SK-N-SH (cell line): ENCODE measurements at regions of chr5 and their contacts with region 1.

Region 1: DNA sequence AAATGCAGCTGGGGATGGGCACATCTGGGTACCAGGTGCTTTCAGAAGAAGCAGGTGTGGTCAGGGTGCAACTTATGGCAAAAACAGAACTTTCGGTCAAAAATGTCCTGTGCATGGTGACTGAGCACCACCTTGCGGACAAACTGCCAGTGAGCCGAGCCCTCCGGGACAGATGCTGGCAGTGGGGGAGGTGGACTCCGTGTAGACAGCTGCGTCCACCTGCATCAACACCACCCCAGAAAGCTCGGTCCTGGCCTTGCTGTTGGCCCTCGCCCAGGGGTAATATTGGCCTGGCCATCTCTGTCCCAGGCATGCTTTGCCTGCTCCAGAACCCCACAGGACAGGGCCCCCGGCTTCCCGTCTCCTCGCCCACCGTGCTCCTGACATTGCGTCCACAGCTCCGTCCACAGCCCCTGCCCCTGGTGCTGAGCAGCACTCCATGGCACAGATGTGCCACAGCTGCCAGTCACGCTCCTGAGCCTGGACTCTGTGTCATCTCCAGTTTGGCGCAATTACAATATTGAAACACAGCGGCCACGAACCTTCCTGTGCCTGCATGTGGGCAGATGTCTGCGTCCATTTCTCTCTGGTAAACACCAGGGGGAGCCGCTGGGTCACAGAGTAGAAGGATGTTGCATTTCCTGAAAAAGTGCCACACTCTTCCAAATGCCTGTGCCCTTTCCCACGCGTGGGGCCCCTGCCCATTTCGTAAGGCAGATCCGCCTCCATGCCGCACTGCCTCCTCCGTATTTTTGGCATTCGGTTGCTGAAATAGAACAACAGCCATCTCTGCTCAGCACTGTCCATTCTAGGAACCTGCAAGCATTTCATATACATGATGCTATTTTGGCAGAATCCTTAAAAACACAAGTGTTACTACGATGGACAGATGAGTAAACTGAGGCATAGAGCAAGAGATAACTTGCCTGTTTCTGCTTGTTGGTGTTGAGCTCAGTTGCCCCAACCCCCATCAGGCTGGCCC is 33.4 kb upstream of the SLC6A19 start:
- DNase-seq: peak; percentile 86
- H3K4me3 ChIP-seq: peak overlapping the region; percentile 26 to 49; a peak in 2 of 4 replicates
- H3K27ac ChIP-seq: no peak overlapping the region
- H3K4me1 ChIP-seq: peaks cover 0 to 8% of the 10 kb centered on the region in 2 experiments; a peak in 1 of 4 replicates
- H3K27me3 ChIP-seq: no peaks in the 10 kb centered on the region
- CTCF ChIP-seq: peak; percentile 65
- EP300 ChIP-seq: no peak
- RAD21 ChIP-seq: peak; percentile 87

Region 2: DNA sequence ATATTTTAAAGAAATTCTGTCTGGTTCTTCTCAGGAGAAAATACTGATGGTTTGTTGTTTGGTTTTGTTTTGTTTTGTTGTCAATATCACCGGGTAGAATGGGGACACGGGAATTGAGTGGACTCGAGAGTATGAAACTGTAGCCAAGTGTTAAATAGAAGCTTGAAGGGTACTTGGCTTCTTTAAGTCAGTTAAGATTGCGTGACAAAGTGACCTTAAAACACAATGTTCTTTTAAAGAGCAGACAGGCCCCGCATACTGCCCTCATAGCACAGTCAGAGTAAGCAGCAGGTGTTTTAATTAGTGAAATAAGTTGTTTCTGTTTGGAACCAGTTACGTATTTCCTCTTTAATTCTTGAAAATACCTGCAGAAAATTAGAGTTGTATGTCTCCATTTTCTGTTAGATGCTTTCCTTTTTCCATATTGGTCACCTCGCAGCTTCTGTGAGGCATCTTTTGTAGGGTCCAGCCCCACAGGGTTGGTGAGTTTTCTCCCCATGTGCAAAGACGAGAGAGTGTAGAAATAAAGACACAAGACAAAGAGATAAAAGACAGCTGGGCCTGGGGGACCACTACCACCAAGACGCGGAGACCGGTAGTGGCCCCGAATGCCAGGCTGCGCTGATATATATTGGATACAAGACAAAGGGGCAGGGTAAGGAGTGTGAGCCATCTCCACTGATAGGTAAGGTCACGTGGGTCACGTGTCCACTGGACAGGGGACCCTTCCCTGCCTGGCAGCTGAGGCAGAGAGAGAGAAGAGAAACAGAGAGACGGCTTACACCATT is 265.7 kb before region 1 on chr5:
- CTCF ChIA-PET with region 1: interaction called, 12 read pairs
- POLR2A ChIA-PET with region 1: no interaction called
- DNase-seq: no peak
- H3K4me3 ChIP-seq: no peak overlapping the region
- H3K27ac ChIP-seq: no peak overlapping the region
- H3K4me1 ChIP-seq: no peaks in the 10 kb centered on the region
- H3K27me3 ChIP-seq: no peaks in the 10 kb centered on the region
- CTCF ChIP-seq: no peak
- EP300 ChIP-seq: no peak
- RAD21 ChIP-seq: no peak

Region 3: GRCh38 chr5:932628-933250 is 235.3 kb before region 1 on chr5:
- CTCF ChIA-PET with region 1: interaction called, 54 read pairs
- POLR2A ChIA-PET with region 1: no interaction called
- DNase-seq: no peak
- H3K4me3 ChIP-seq: no peak overlapping the region
- H3K27ac ChIP-seq: no peak overlapping the region
- H3K4me1 ChIP-seq: no peaks in the 10 kb centered on the region
- H3K27me3 ChIP-seq: peaks cover 12% of the 10 kb centered on the region
- CTCF ChIP-seq: no peak
- EP300 ChIP-seq: no peak
- RAD21 ChIP-seq: no peak

Region 4: GRCh38 chr5:1004461-1005248 is 163.4 kb before region 1 on chr5:
- CTCF ChIA-PET with region 1: interaction called, 22 read pairs
- POLR2A ChIA-PET with region 1: no interaction called
- DNase-seq: peak; percentile 78
- H3K4me3 ChIP-seq: peak overlapping the region; percentile 31 to 37; a peak in 2 of 4 replicates
- H3K27ac ChIP-seq: no peak overlapping the region
- H3K4me1 ChIP-seq: peaks cover 0 to 2% of the 10 kb centered on the region in 2 experiments; a peak in 1 of 4 replicates
- H3K27me3 ChIP-seq: peaks cover 54% of the 10 kb centered on the region
- CTCF ChIP-seq: no peak; the same call in 1 of the 2 replicates
- EP300 ChIP-seq: no peak
- RAD21 ChIP-seq: peak; percentile 19; the same call in 1 of the 2 replicates

Region 5: GRCh38 chr5:1090538-1090937 is 77.5 kb before region 1 on chr5:
- CTCF ChIA-PET with region 1: no interaction called
- POLR2A ChIA-PET with region 1: no interaction called
- DNase-seq: no peak
- H3K4me3 ChIP-seq: no peak overlapping the region
- H3K27ac ChIP-seq: no peak overlapping the region
- H3K4me1 ChIP-seq: peaks cover 0 to 8% of the 10 kb centered on the region in 2 experiments; a peak in 1 of 4 replicates
- H3K27me3 ChIP-seq: no peaks in the 10 kb centered on the region
- CTCF ChIP-seq: no peak
- EP300 ChIP-seq: no peak
- RAD21 ChIP-seq: no peak

Region 6: GRCh38 chr5:1125030-1125357 is 43.0 kb before region 1 on chr5:
- CTCF ChIA-PET with region 1: interaction called, 12 read pairs
- POLR2A ChIA-PET with region 1: no interaction called
- DNase-seq: peak; percentile 93
- H3K4me3 ChIP-seq: no peak overlapping the region
- H3K27ac ChIP-seq: peak overlapping the region in 1 of 2 experiments; percentile 54; a peak in 2 of 4 replicates
- H3K4me1 ChIP-seq: peaks cover 0 to 30% of the 10 kb centered on the region in 2 experiments; a peak in 1 of 4 replicates
- H3K27me3 ChIP-seq: peaks cover 4% of the 10 kb centered on the region; the same call in 1 of the 2 replicates
- CTCF ChIP-seq: no peak
- EP300 ChIP-seq: peak in 1 of 2 experiments; percentile 86; a peak in 2 of 4 replicates
- RAD21 ChIP-seq: peak; percentile 18; the same call in 1 of the 2 replicates

Region 7: GRCh38 chr5:1152156-1152555 is 15.9 kb before region 1 on chr5:
- CTCF ChIA-PET with region 1: interaction called, 28 read pairs
- POLR2A ChIA-PET with region 1: no interaction called
- DNase-seq: no peak
- H3K4me3 ChIP-seq: no peak overlapping the region
- H3K27ac ChIP-seq: no peak overlapping the region
- H3K4me1 ChIP-seq: no peaks in the 10 kb centered on the region; a peak in 1 of 4 replicates
- H3K27me3 ChIP-seq: peaks cover 16% of the 10 kb centered on the region
- CTCF ChIP-seq: no peak
- EP300 ChIP-seq: no peak
- RAD21 ChIP-seq: no peak

Region 8: DNA sequence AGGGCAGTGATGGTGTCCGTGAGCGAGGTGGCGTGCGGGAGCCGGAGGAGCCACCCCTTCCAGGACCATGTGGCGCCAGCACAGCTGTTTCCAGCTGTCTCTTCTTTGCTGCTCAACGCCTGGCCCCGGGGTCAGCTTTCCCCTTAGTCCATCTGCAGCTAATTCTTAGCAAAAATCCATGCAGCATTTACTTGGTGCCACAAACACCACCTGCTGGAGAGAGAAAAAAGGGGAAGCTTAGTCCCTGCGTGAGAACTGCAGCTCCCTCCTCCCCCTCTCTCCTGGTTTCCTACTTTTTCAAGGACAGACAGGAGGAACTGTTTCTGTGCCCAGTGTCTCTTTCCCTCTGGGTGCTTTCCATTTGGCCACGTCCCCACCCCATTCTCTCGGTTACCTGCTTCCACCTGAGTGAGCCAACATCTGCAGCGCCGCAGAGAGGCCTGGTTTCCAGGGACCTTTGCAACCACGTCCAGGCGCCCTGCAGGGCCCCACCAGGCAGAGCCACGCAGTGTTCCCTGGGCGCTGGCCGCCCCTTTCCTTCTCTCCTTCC is 36.7 kb after region 1 on chr5:
- CTCF ChIA-PET with region 1: interaction called, 23 read pairs
- POLR2A ChIA-PET with region 1: no interaction called
- DNase-seq: peak; percentile 76
- H3K4me3 ChIP-seq: no peak overlapping the region
- H3K27ac ChIP-seq: no peak overlapping the region
- H3K4me1 ChIP-seq: no peaks in the 10 kb centered on the region
- H3K27me3 ChIP-seq: peaks cover 59% of the 10 kb centered on the region
- CTCF ChIP-seq: peak; percentile 21
- EP300 ChIP-seq: no peak
- RAD21 ChIP-seq: peak; percentile 41